Mucosa of descending colon (tissue), 3 donors: ENCODE measurements at regions of chr12 and their contacts with region 1.

Region 1: GRCh38 chr12:67648521-67649260 is at the start of gene DYRK2:
- DNase-seq: peak; percentile 89
- ATAC-seq: peak; percentile 72
- H3K4me3 ChIP-seq: peak within 1 kb of the TSS; percentile 97
- H3K4me1 ChIP-seq: peaks cover 22% of the 10 kb centered on the region
- CTCF ChIP-seq: no peak
- total RNA-seq, gene DYRK2: 65.2 to 161 (median 111) TPM

Region 2: GRCh38 chr12:67434671-67435370 is 213.9 kb before region 1 on chr12:
- intact Hi-C with region 1: loop called in 1 of 2 experiments (anchors 5 kb)
- DNase-seq: no peak
- ATAC-seq: peak; percentile 31
- H3K4me3 ChIP-seq: no peak overlapping the region
- H3K4me1 ChIP-seq: peaks cover 30% of the 10 kb centered on the region
- CTCF ChIP-seq: no peak

Region 3: DNA sequence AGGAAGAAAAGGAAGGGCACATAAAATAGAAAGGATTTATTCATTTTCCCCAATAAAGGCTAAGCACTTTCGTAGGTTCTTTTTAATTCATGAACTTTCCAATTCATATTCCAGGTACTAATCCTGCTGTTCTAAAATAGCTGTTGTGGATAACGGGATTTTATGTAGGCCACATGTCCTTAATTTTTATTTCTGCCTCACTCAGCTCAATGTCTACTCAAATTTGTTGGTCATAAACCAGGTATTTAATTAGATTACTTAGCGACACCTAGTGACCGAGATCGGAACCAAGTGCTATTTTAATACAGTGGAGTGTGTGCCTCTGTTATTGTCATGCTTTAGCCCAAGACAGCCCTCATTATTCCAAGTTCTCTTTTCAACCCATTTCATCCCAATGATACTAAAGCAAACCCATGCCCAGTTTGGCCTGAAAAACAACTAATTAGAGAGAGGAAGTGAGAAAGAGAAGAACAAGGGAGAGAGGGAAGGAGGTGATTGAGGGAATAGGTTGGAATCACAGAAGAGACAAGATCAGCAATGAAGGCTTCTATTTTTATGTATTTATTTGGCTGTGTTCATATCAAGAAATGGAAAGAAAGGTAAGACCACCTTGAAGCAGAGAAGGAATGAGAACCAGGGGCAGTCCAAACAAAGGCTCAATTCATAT is 294.7 kb after region 1 on chr12:
- intact Hi-C with region 1: loop called in 1 of 2 experiments (anchors 5 kb)
- DNase-seq: peak in 1 of 3 donors; percentile 98
- ATAC-seq: peak; percentile 83
- H3K4me3 ChIP-seq: no peak overlapping the region
- H3K4me1 ChIP-seq: peaks cover 8% of the 10 kb centered on the region
- CTCF ChIP-seq: peak; percentile 47